H1 (cell line): ENCODE measurements at regions of chr1 and their contacts with region 1.

Region 1: DNA sequence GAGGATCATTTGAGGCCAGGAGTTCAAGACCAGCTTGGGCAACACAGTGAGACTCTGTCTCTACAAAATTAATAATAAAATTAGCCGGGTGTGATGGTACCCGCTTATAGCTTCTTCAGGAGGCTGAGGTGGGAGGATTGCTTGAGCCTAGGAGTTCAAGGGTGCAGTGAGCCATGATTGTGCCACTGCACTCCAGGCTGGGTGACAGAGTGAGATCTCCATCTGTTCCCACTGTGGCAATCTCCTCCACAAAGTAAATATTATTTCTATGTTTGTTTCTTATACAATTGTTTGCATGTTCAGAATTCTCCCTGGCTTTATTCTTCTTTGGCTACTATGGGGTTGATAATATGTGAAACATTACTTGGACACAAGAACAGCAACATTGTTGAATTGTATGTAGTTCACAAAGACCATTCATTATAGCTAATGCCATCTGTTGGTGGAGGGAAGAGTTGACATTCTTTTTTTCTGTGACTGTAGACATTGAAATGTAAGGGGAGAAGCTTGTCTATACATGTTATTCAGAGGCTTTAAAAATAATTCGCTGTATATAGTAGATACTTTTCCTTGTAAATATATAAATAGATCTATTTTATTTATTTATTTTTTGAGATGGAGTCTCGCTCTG is 47.8 kb upstream of the SRSF10 start:
- DNase-seq: no peak
- H3K4me3 ChIP-seq: no peak overlapping the region
- H3K27ac ChIP-seq: no peak overlapping the region
- H3K4me1 ChIP-seq: no peaks in the 10 kb centered on the region
- H3K27me3 ChIP-seq: no peaks in the 10 kb centered on the region
- CTCF ChIP-seq: peak in 1 of 3 experiments; percentile 44; a peak in 2 of 4 replicates
- EP300 ChIP-seq: no peak
- POLR2A ChIP-seq: no peak
- RAD21 ChIP-seq: peak; percentile 31 to 37

Region 2: DNA sequence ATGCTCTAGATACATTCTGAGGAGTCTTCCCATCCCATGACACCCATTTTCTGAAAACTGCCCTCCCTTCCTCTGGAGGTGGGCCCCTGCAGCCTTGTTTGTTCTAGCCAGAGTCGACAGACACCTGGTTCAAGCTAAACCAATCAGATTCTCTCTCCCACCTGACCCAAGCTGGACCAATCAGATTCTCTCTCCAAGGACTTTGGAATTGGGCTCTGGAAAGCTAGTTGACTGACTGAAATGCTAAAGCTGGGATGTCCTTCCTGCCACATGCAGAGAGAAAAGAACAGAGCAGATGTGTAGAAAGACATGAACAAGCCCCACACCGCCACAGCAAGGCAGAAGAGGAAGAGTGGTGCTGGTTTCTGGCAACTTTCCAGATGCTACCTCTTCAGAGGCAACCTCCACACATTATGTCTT is 568.6 kb before region 1 on chr1:
- CTCF ChIA-PET with region 1: no interaction called
- POLR2A ChIA-PET with region 1: no interaction called
- DNase-seq: no peak
- H3K4me3 ChIP-seq: no peak overlapping the region
- H3K27ac ChIP-seq: no peak overlapping the region
- H3K4me1 ChIP-seq: no peaks in the 10 kb centered on the region
- H3K27me3 ChIP-seq: no peaks in the 10 kb centered on the region
- CTCF ChIP-seq: no peak
- EP300 ChIP-seq: no peak
- POLR2A ChIP-seq: no peak
- RAD21 ChIP-seq: no peak

Region 3: DNA sequence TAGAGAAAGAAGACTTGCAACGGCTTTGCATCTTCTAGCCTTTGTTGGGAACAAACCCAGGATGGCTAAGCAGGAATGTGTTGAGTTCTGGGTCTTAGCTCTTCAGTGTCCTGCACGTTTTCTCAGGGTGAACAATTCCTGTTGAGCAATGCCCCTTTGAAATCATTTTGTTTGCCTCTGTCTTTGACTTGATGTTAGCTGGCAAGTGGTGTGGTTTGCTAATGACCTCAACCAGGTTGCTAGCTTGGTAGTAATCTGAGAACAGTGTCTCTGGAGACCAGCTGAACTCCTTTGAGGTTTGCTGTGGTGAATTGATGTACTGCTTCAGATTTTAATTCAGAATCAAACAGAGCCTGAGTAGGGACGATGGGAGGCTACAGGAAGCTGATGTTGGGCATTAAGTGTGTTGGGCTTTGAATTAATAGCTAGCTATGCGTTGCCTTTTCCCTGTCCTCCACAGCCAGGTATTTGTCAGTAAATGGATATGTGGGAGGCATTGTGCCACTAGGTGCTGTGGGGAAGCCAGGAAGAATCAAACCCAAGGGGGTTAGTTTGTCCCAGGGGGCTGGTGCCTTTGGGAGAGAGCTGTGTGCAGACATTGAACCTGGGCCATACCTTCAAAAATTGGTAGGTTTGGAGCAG is 24.5 kb before region 1 on chr1:
- CTCF ChIA-PET with region 1: interaction called, 24 read pairs
- POLR2A ChIA-PET with region 1: no interaction called
- DNase-seq: peak in 1 of 2 experiments; percentile 21
- H3K4me3 ChIP-seq: peak overlapping the region in 1 of 4 experiments; percentile 37; a peak in 3 of 8 replicates
- H3K27ac ChIP-seq: peak overlapping the region; percentile 51; the same call in 1 of the 2 replicates
- H3K4me1 ChIP-seq: peaks cover 5 to 13% (median 12%) of the 10 kb centered on the region in 4 experiments
- H3K27me3 ChIP-seq: no peaks in the 10 kb centered on the region
- CTCF ChIP-seq: no peak
- EP300 ChIP-seq: no peak
- POLR2A ChIP-seq: no peak
- RAD21 ChIP-seq: no peak

Region 4: DNA sequence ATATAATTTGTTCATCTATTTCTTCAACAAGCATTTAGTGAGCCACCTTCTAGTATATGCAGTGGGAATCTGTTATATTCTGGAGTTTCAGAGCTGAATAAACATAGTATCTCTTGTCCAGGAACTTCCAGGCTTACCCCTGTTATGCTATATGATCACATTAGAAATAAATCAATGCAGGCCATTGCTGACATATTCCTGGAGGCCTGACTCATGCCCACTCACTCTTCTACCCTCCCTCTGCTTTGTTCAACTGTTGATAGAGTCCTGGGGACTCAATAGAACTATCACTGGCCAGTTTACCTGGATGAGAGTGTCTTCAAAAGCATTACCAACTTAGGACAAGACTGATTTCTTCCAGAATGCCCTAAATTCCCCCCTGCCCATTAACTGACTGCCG is 18.5 kb before region 1 on chr1:
- CTCF ChIA-PET with region 1: interaction called, 24 read pairs
- POLR2A ChIA-PET with region 1: no interaction called
- DNase-seq: no peak
- H3K4me3 ChIP-seq: no peak overlapping the region
- H3K27ac ChIP-seq: no peak overlapping the region
- H3K4me1 ChIP-seq: no peaks in the 10 kb centered on the region; a peak in 2 of 7 replicates
- H3K27me3 ChIP-seq: no peaks in the 10 kb centered on the region
- CTCF ChIP-seq: no peak
- EP300 ChIP-seq: no peak
- POLR2A ChIP-seq: no peak
- RAD21 ChIP-seq: no peak